CD8-positive, alpha-beta memory T cell (primary cell): ENCODE measurements at regions of chr22 and their contacts with region 1.

Region 1: DNA sequence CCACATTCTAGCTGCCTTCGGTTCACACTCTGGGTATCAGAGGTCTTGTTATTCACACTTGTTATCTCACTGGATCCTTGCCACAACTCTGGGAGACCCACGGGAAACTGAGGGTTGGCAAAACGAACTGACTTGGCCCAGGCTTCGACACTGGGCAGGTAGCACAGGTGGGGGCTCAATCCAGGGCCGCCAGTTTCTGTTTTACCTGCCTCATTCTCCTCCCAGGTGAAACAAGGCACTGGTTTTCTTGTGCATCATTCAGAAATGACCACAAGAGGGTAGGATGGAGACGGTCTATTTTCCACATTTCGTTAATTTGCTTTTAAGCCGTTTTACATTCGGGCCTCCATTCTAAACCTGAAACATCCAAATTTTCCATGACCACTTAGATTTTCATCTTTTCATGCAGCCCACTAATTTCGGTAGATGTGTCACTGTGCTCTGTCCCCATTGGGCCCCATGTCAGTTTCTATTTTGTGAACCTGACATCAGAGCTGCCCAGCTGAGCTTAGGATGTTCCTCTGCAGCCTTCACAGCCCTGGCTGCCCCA is 108.1 kb downstream of the KIAA1671 start:
- DNase-seq: peak in 3 of 5 donors; percentile 13 to 57 (median 39)
- H3K4me3 ChIP-seq: no peak overlapping the region
- H3K4me3 Mint-ChIP-seq: peak overlapping the region in 6 of 7 donors; percentile 18 to 75 (median 58)
- H3K27ac ChIP-seq: no peak overlapping the region
- H3K27ac Mint-ChIP-seq: peak overlapping the region; percentile 52 to 100 (median 86)
- H3K4me1 ChIP-seq: peaks cover 43% of the 10 kb centered on the region
- H3K4me1 Mint-ChIP-seq: peaks cover 45 to 61% (median 45%) of the 10 kb centered on the region in 3 donors
- H3K27me3 ChIP-seq: no peaks in the 10 kb centered on the region
- H3K27me3 Mint-ChIP-seq: peaks cover 0 to 4% of the 10 kb centered on the region in 2 donors

Region 2: GRCh38 chr22:25048659-25049647 is 11.6 kb before region 1 on chr22:
- CTCF ChIA-PET with region 1: interaction called, 14 read pairs
- POLR2A ChIA-PET with region 1: no interaction called
- DNase-seq: peak; percentile 54 to 76 (median 59)
- H3K4me3 ChIP-seq: no peak overlapping the region
- H3K4me3 Mint-ChIP-seq: no peak overlapping the region
- H3K27ac ChIP-seq: no peak overlapping the region
- H3K27ac Mint-ChIP-seq: peak overlapping the region in 1 of 8 donors; percentile 43
- H3K4me1 ChIP-seq: no peaks in the 10 kb centered on the region
- H3K4me1 Mint-ChIP-seq: no peaks in the 10 kb centered on the region
- H3K27me3 ChIP-seq: no peaks in the 10 kb centered on the region
- H3K27me3 Mint-ChIP-seq: no peaks in the 10 kb centered on the region

Region 3: DNA sequence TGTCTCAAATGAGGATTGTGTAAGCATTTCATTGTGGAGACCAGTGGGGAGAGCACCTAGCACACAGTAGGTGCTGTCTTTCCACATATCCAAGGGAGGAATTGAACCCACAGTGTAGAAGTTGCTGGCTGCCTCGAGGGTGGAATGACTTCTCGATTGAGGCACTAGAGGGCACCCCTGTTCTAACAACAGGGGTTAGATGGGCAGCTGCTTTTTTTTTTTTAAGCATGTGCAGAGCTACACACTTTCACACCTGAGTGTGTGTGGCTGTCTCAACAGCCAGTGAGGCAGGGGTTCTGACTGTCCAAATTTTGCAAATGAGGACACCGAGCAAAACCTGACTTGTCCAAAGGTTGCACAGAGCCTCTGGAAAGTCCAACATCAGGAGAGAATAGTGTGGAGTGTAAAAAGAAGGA is 20.8 kb after region 1 on chr22:
- CTCF ChIA-PET with region 1: interaction called, 71 read pairs
- POLR2A ChIA-PET with region 1: interaction called, 6 read pairs
- DNase-seq: peak in 4 of 5 donors; percentile 22 to 66 (median 40)
- H3K4me3 ChIP-seq: no peak overlapping the region
- H3K4me3 Mint-ChIP-seq: peak overlapping the region in 1 of 7 donors; percentile 29
- H3K27ac ChIP-seq: no peak overlapping the region
- H3K27ac Mint-ChIP-seq: peak overlapping the region in 4 of 8 donors; percentile 66 to 81 (median 76)
- H3K4me1 ChIP-seq: peaks cover 35% of the 10 kb centered on the region
- H3K4me1 Mint-ChIP-seq: peaks cover 50 to 73% (median 70%) of the 10 kb centered on the region in 3 donors
- H3K27me3 ChIP-seq: no peaks in the 10 kb centered on the region
- H3K27me3 Mint-ChIP-seq: peaks cover 0 to 2% of the 10 kb centered on the region in 2 donors